ENCODE measurements at regions of chrX and their contacts with region 1.

Region 1: GRCh38 chrX:134520860-134521390 is 61.0 kb downstream of the HPRT1 start:
- DNase-seq: no peak
- H3K4me3 ChIP-seq: no peak overlapping the region
- H3K27ac ChIP-seq: no peak overlapping the region
- H3K27me3 ChIP-seq: no peaks in the 10 kb centered on the region
- CTCF ChIP-seq: peak; percentile 61

Region 2: DNA sequence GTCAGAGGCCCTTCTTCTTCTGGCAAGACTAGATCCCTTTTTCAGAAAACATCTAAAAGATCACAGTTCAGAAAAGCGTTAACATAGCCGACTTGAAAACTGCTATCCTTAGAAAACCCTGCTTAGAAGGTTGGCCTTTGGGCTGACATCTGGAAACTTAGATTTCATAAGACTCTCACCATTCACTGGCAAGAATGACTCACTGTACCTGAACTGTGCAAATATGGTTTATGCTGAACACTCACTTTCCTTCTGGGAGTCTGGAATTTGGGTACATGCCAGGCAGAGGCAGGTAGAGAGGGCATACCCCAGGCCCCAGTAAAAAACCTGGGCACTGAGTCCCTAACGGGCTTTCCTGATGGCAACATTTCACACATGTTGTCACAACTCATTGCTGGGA is 446.8 kb before region 1 on chrX:
- CTCF ChIA-PET with region 1: no interaction called
- POLR2A ChIA-PET with region 1: no interaction called
- DNase-seq: no peak
- H3K4me3 ChIP-seq: no peak overlapping the region
- H3K27ac ChIP-seq: no peak overlapping the region
- H3K27me3 ChIP-seq: no peaks in the 10 kb centered on the region
- CTCF ChIP-seq: no peak

Region 3: GRCh38 chrX:134115270-134115669 is 405.7 kb before region 1 on chrX:
- CTCF ChIA-PET with region 1: no interaction called
- POLR2A ChIA-PET with region 1: no interaction called
- DNase-seq: no peak
- H3K4me3 ChIP-seq: no peak overlapping the region
- H3K27ac ChIP-seq: no peak overlapping the region
- H3K27me3 ChIP-seq: no peaks in the 10 kb centered on the region
- CTCF ChIP-seq: no peak

Region 4: DNA sequence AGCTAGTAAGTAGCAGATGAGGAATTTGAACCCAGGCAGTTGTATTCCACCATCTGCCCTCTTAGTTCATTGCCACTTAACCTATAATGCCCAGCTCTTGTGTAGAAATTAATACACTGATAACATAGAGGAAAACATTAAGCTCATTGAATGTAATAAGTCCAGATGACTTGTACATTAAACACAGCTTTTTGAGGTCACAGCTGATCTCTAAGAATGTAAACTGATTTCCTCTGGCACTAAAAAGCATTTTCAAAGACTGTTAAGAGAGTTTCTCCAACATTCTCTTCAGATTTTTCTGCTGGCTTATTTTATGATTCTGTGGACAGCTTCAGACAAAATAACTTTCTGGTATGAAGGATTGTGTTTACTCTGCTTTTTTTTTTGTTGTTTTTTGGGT is 18.2 kb before region 1 on chrX:
- CTCF ChIA-PET with region 1: interaction called, 11 read pairs
- POLR2A ChIA-PET with region 1: no interaction called
- DNase-seq: no peak
- H3K4me3 ChIP-seq: no peak overlapping the region
- H3K27ac ChIP-seq: no peak overlapping the region
- H3K27me3 ChIP-seq: no peaks in the 10 kb centered on the region
- CTCF ChIP-seq: no peak

Region 5: GRCh38 chrX:134558133-134558532 is 37.2 kb after region 1 on chrX:
- CTCF ChIA-PET with region 1: interaction called, 10 read pairs
- POLR2A ChIA-PET with region 1: no interaction called
- DNase-seq: no peak
- H3K4me3 ChIP-seq: no peak overlapping the region
- H3K27ac ChIP-seq: no peak overlapping the region
- H3K27me3 ChIP-seq: no peaks in the 10 kb centered on the region
- CTCF ChIP-seq: no peak

Region 6: DNA sequence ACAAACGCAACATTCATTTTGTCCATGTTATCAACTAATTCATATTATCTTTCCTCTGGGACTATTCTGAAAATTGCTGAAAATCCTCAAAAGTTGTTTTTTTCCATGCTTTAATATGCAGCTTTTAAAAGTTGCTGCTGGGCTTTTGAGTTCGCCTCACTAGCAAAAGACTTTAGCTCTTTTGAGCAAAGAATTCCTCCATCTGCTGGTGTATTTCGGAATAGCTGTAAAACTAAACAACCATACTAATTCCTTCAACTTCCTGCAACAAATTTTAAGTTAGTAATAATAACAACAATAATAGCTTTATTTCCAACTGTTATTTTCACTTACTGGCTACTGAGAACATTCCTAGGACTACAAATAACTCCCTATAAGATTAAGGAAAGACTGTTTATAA is 261.9 kb after region 1 on chrX:
- CTCF ChIA-PET with region 1: interaction called, 31 read pairs
- POLR2A ChIA-PET with region 1: interaction called, 3 read pairs
- DNase-seq: no peak
- H3K4me3 ChIP-seq: no peak overlapping the region
- H3K27ac ChIP-seq: no peak overlapping the region
- H3K27me3 ChIP-seq: no peaks in the 10 kb centered on the region
- CTCF ChIP-seq: peak; percentile 54